Activated CD8-positive, alpha-beta T cell treated with anti-CD3 and anti-CD28 coated beads for 36 hours (primary cell): ENCODE measurements at regions of chr7 and their contacts with region 1.

Region 1: GRCh38 chr7:100148559-100149350 is at the start of gene LAMTOR4:
- DNase-seq: peak; percentile 99
- ATAC-seq: peak; percentile 98
- H3K4me3 Mint-ChIP-seq: peak within 1 kb of the TSS; percentile 99
- H3K27ac Mint-ChIP-seq: peak within 1 kb of the TSS; percentile 99
- H3K4me1 Mint-ChIP-seq: peaks cover 26% of the 10 kb centered on the region
- H3K27me3 Mint-ChIP-seq: no peaks in the 10 kb centered on the region
- CTCF ChIP-seq: no peak
- total RNA-seq, gene LAMTOR4: 108 to 116 TPM

Region 2: DNA sequence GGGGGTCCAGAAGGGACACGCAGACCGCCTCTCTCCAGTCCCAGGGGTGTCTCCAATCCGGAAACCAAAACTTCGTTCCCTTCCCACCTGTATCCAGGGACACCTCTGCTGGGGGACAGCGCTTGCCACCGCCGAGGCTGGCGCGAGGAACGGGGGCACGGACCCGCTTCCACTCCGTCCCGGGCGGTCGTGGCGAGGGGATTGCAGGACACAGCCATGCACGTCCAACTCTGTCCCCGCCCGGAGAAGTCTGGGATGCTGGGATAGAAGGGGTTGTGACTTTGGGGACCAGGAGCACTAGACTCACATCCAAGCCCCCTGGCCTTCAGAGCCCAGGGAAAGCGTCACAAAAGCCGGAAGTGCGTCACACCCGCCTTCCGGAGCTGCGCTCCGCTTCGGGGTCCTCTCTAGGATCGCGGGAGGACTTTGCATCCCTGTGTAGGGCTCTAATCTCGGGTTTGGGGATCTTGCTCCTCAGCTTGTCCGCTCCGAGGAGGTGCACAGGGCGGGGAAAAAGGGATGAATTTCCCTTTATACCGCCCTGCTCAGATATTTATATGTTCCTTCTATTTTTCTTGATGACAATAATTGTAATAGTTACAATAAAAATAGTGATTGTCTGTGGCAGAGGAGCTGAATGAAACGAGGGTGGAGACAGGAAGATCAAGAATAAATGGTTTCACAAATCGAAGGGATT is 596.8 kb before region 1 on chr7 and contains the start of gene FAM200A:
- CTCF ChIA-PET with region 1: no interaction called
- POLR2A ChIA-PET with region 1: no interaction called
- intact Hi-C with region 1: no loop called
- DNase-seq: peak; percentile 91
- ATAC-seq: peak; percentile 99
- H3K4me3 Mint-ChIP-seq: peak within 1 kb of the TSS; percentile 90
- H3K27ac Mint-ChIP-seq: peak within 1 kb of the TSS; percentile 93
- H3K4me1 Mint-ChIP-seq: peaks cover 27% of the 10 kb centered on the region
- H3K27me3 Mint-ChIP-seq: no peaks in the 10 kb centered on the region
- CTCF ChIP-seq: no peak
- total RNA-seq, gene FAM200A: 4.8 to 4.9 TPM

Region 3: GRCh38 chr7:100109521-100110162 is 39.1 kb before region 1 on chr7:
- CTCF ChIA-PET with region 1: no interaction called
- POLR2A ChIA-PET with region 1: no interaction called
- intact Hi-C with region 1: no loop called
- DNase-seq: no peak
- ATAC-seq: no peak
- H3K4me3 Mint-ChIP-seq: no peak overlapping the region
- H3K27ac Mint-ChIP-seq: no peak overlapping the region
- H3K4me1 Mint-ChIP-seq: no peaks in the 10 kb centered on the region
- H3K27me3 Mint-ChIP-seq: no peaks in the 10 kb centered on the region
- CTCF ChIP-seq: no peak

Region 4: GRCh38 chr7:100137851-100138760 is 10.6 kb before region 1 on chr7:
- CTCF ChIA-PET with region 1: interaction called, 27 read pairs
- POLR2A ChIA-PET with region 1: interaction called, 5 read pairs
- intact Hi-C with region 1: no loop called
- DNase-seq: no peak
- ATAC-seq: no peak
- H3K4me3 Mint-ChIP-seq: no peak overlapping the region
- H3K27ac Mint-ChIP-seq: peak overlapping the region; percentile 65
- H3K4me1 Mint-ChIP-seq: peaks cover 13% of the 10 kb centered on the region
- H3K27me3 Mint-ChIP-seq: no peaks in the 10 kb centered on the region
- CTCF ChIP-seq: no peak

Region 5: GRCh38 chr7:100208911-100209408 is 60.2 kb after region 1 on chr7:
- CTCF ChIA-PET with region 1: interaction called, 6 read pairs
- POLR2A ChIA-PET with region 1: no interaction called
- intact Hi-C with region 1: loop called (anchors 5 kb)
- DNase-seq: peak; percentile 85
- ATAC-seq: peak; percentile 83
- H3K4me3 Mint-ChIP-seq: no peak overlapping the region
- H3K27ac Mint-ChIP-seq: peak overlapping the region; percentile 76
- H3K4me1 Mint-ChIP-seq: peaks cover 46% of the 10 kb centered on the region
- H3K27me3 Mint-ChIP-seq: no peaks in the 10 kb centered on the region
- CTCF ChIP-seq: no peak